Sigmoid colon (tissue), 7 donors: ENCODE measurements at regions of chr6 and their contacts with region 1.

Region 1: DNA sequence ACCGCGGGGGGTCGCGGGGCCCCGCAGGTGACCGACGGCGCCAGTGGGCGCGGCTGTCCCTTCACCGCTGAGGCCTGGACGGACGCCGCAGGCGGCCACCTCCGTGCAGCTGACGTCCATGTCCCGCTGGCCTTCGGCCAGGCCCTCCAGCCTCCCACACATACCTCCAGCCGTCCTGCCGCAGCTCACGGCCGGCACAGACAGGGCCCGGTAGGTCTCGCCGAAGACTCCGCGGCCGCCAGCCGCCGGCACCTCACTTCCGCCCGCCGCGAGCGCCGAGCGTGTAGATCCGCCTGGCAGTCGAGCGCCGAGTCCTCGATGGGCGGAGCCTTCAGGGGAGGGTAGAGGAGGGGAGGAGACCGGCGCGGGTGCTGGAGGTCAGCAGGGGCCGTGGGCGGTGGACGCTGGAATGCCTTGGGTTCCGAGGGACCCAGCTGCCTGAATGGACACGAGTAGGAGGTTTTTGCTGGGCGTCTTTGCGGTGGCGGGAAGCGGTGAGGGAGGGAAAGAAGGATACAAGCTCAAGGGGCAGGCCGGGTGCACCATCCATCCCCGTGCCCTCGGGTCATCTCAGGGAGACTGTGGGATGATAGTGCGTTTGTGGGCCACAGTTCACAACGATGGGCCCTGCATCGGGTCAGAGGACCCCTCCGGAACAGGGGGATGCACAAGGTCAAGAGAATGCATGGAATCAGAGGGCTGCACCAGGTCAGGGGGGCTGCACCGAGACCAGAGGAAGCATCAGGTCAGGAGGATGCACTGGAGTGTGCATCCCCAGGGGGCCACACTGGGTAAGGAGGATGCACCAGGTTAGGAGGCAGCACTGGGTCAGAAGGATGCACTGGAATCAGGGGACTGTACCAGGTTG is at the start of gene EXOC2:
- DNase-seq: peak; percentile 91
- H3K4me3 ChIP-seq: peak within 1 kb of the TSS; percentile 80 to 98 (median 90)
- H3K27ac ChIP-seq: peak within 1 kb of the TSS; percentile 81 to 90 (median 86)
- H3K4me1 ChIP-seq: peaks cover 0 to 28% (median 23%) of the 10 kb centered on the region in 4 donors
- H3K27me3 ChIP-seq: no peaks in the 10 kb centered on the region
- CTCF ChIP-seq: no peak
- EP300 ChIP-seq: no peak
- POLR2A ChIP-seq: peak; percentile 38 to 42
- total RNA-seq, gene EXOC2: 15.3 to 23.2 (median 19.1) TPM

Region 2: DNA sequence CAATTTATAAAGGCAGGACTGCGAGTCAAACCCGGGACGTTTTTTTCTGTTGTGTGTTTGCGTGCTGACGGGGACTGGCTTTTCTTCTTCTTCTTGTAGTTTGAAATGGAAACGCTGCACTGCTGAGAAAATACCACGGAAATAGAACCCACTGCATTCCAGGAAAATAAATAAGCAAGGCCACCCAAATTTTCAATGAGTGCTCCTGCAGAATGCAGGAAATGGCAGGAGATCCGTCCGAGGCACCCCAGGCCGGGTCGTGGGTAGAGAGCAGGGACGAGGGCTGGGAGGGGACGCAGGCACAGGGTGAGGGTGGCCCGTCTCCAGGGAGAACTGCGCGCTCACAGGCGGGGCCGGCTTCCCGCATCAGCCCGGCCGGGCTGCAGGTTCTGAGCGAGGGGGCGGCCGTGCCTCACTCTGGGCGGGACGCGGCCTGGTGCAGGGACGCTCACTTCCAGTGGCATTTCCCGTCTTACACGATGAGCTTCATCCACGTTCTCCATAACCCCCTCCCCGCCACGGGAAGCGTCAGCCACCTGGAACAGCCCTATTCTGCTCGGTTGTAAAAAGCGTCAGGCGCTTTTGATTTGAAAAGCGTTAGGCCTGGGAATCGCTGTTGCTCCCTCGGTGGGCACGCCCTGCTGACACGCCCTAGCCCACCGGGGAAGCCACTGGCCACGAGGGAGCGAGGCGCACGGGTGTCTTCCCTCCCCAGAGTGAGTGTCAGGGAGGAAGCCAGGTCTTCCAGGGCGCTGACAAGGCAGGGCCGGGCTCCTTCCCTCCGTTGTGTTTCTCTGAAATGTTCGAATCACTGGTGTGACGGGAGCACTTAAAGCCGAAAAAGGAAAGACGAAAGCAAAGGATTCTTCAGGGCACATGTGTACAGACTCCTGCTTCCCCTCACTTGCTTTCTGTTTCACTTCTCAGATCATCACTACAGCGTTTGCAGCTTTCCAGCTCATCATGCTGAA is 17.8 kb after region 1 on chr6:
- intact Hi-C with region 1: loop called (anchors 2 kb)
- DNase-seq: peak; percentile 81
- H3K4me3 ChIP-seq: peak overlapping the region; percentile 50 to 83 (median 61)
- H3K27ac ChIP-seq: peak overlapping the region; percentile 91 to 97 (median 94)
- H3K4me1 ChIP-seq: peaks cover 0 to 10% (median 7%) of the 10 kb centered on the region in 4 donors
- H3K27me3 ChIP-seq: no peaks in the 10 kb centered on the region
- CTCF ChIP-seq: no peak
- EP300 ChIP-seq: peak in 1 of 4 donors; percentile 16
- POLR2A ChIP-seq: peak; percentile 56 to 58